Transverse colon (tissue), 4 donors: ENCODE measurements at regions of chr3 and their contacts with region 1.

Region 1: DNA sequence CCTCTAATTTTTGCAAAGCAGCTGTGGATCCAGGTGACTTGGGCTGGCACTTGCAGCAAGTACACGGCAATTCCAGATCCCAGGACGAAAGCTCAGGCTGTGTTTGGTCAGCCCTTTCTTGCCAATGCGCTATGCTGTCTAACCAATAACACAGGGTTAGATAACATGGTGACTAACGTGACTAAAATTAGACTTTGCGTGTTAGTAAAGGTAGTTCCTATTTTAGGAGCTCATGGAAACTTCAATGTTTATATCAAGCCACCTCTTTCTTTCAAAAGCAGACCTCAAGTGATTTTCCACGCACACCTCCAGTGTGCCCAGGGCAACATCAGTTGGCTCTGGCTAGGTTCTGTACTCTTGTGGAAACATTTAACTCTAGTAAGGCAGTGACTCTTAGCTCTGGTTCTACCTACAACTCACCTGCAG is 32.5 kb downstream of the CDCP1 start:
- DNase-seq: no peak
- H3K4me3 ChIP-seq: no peak overlapping the region
- H3K27ac ChIP-seq: peak overlapping the region in 1 of 4 donors; percentile 33
- H3K4me1 ChIP-seq: peaks cover 9 to 49% (median 33%) of the 10 kb centered on the region in 4 donors
- H3K27me3 ChIP-seq: no peaks in the 10 kb centered on the region
- CTCF ChIP-seq: no peak
- EP300 ChIP-seq: no peak
- POLR2A ChIP-seq: no peak

Region 2: GRCh38 chr3:44561076-44561475 is 552.6 kb before region 1 on chr3:
- in situ Hi-C with region 1: no loop called
- intact Hi-C with region 1: no loop called
- DNase-seq: no peak
- H3K4me3 ChIP-seq: no peak overlapping the region
- H3K27ac ChIP-seq: no peak overlapping the region
- H3K4me1 ChIP-seq: peaks cover 0 to 4% (median 1%) of the 10 kb centered on the region in 4 donors
- H3K27me3 ChIP-seq: no peaks in the 10 kb centered on the region
- CTCF ChIP-seq: no peak
- EP300 ChIP-seq: no peak
- POLR2A ChIP-seq: no peak

Region 3: DNA sequence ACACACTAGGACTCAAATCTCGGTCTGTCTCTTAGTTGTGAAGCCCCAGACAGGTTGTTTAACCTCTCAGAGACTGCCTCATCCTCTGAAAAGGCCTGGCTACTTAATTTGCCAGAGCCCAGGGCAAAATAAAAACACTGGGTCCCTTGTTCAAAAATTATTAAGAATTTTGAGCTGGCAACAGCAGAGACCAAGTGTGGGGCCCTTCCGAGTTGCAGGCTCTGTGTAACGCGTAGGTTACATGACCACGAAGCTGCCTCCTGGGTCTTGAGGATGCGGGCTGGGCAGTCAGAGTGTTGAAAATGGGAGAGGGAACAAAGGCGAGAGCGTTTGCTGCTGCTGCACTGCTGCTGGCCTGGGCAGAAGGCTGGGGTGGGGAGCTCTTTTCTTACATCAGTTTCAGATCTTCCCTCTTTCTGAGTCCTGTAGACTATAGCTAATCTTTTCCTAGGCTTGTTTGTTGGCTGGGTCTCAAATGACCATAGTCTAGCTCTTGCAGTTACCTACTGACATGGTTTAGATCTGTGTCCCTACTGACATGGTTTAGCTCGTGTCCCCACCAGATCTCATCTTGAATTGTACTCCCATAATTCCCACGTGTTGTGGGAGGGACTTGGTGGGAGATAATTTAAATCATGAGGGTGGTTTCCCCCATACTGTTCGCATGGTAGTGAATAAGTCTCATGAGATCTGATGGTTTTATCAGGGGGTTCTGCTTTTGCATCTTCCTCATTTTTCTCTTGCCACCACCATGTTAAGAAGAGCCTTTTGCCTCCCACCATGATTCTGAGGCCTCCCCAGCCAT is 37.6 kb before region 1 on chr3:
- in situ Hi-C with region 1: no loop called
- intact Hi-C with region 1: loop called (anchors 2 kb)
- DNase-seq: no peak
- H3K4me3 ChIP-seq: no peak overlapping the region
- H3K27ac ChIP-seq: no peak overlapping the region
- H3K4me1 ChIP-seq: peaks cover 3 to 14% (median 13%) of the 10 kb centered on the region in 4 donors
- H3K27me3 ChIP-seq: no peaks in the 10 kb centered on the region
- CTCF ChIP-seq: no peak
- EP300 ChIP-seq: no peak
- POLR2A ChIP-seq: no peak